Sigmoid colon (tissue), 7 donors: ENCODE measurements at regions of chr3 and their contacts with region 1.

Region 1: GRCh38 chr3:102229062-102229655 is 205.7 kb upstream of the ZPLD1 start:
- DNase-seq: peak; percentile 79
- H3K4me3 ChIP-seq: no peak overlapping the region
- H3K27ac ChIP-seq: no peak overlapping the region
- H3K4me1 ChIP-seq: peaks cover 0 to 10% (median 0%) of the 10 kb centered on the region in 4 donors
- H3K27me3 ChIP-seq: no peaks in the 10 kb centered on the region
- CTCF ChIP-seq: peak; percentile 83 to 93 (median 90)
- EP300 ChIP-seq: no peak
- POLR2A ChIP-seq: no peak

Region 2: GRCh38 chr3:101685870-101686412 is 543.2 kb before region 1 on chr3:
- intact Hi-C with region 1: loop called (anchors 10 kb)
- DNase-seq: no peak
- H3K4me3 ChIP-seq: peak overlapping the region; percentile 58 to 77 (median 64)
- H3K27ac ChIP-seq: peak overlapping the region; percentile 92 to 96 (median 94)
- H3K4me1 ChIP-seq: peaks cover 0 to 39% (median 33%) of the 10 kb centered on the region in 4 donors
- H3K27me3 ChIP-seq: no peaks in the 10 kb centered on the region
- CTCF ChIP-seq: no peak
- EP300 ChIP-seq: no peak
- POLR2A ChIP-seq: no peak

Region 3: GRCh38 chr3:101809178-101810021 is 419.8 kb before region 1 on chr3:
- intact Hi-C with region 1: loop called (anchors 2 kb)
- DNase-seq: no peak
- H3K4me3 ChIP-seq: no peak overlapping the region
- H3K27ac ChIP-seq: peak overlapping the region; percentile 7 to 52 (median 36)
- H3K4me1 ChIP-seq: peaks cover 0 to 37% (median 16%) of the 10 kb centered on the region in 4 donors
- H3K27me3 ChIP-seq: no peaks in the 10 kb centered on the region
- CTCF ChIP-seq: peak; percentile 45 to 61 (median 56)
- EP300 ChIP-seq: no peak
- POLR2A ChIP-seq: no peak

Region 4: GRCh38 chr3:101995371-101996046 is 233.7 kb before region 1 on chr3:
- intact Hi-C with region 1: loop called (anchors 5 kb)
- DNase-seq: no peak
- H3K4me3 ChIP-seq: no peak overlapping the region
- H3K27ac ChIP-seq: peak overlapping the region in 1 of 4 donors; percentile 41
- H3K4me1 ChIP-seq: peaks cover 0 to 24% (median 14%) of the 10 kb centered on the region in 4 donors
- H3K27me3 ChIP-seq: no peaks in the 10 kb centered on the region
- CTCF ChIP-seq: no peak
- EP300 ChIP-seq: no peak
- POLR2A ChIP-seq: no peak

Region 5: GRCh38 chr3:102536456-102536855 is 307.3 kb after region 1 on chr3:
- intact Hi-C with region 1: loop called (anchors 2 kb)
- DNase-seq: no peak
- H3K4me3 ChIP-seq: no peak overlapping the region
- H3K27ac ChIP-seq: no peak overlapping the region
- H3K4me1 ChIP-seq: no peaks in the 10 kb centered on the region
- H3K27me3 ChIP-seq: no peaks in the 10 kb centered on the region
- CTCF ChIP-seq: peak in 1 of 4 experiments; percentile 28
- EP300 ChIP-seq: no peak
- POLR2A ChIP-seq: no peak